ENCODE measurements at regions of chr3 and their contacts with region 1.

Region 1: DNA sequence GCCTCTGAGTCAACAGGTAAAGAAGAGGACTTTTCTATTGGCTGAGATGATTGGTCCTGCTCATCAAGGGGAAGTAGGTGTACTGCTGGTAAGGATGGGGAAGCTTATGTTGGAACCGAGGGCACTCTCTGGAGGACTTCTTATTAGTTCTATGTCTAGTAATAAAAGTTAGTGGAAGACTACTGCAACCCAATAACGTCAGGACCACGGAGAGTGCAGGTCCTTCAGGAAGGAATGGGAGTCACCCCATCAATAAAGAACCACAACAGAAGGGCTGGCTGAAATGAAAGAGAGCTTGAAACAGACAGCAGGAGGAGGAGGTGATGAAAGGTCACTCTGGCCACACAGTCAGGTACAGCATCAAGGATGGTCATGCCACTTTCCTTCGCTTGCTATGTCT is 68.8 kb upstream of the PRR23E start:
- DNase-seq: peak; percentile 21
- H3K4me3 ChIP-seq: no peak overlapping the region
- H3K27ac ChIP-seq: no peak overlapping the region
- H3K4me1 ChIP-seq: no peaks in the 10 kb centered on the region
- H3K27me3 ChIP-seq: no peaks in the 10 kb centered on the region
- CTCF ChIP-seq: peak in 1 of 2 donors; percentile 38

Region 2: GRCh38 chr3:127083778-127084670 is 40.1 kb before region 1 on chr3:
- CTCF ChIA-PET with region 1: no interaction called
- dilution Hi-C with region 1: loop called (anchors 5 kb)
- in situ Hi-C with region 1: no loop called
- intact Hi-C with region 1: no loop called
- DNase-seq: no peak
- H3K4me3 ChIP-seq: no peak overlapping the region
- H3K27ac ChIP-seq: no peak overlapping the region
- H3K4me1 ChIP-seq: no peaks in the 10 kb centered on the region
- H3K27me3 ChIP-seq: no peaks in the 10 kb centered on the region
- CTCF ChIP-seq: no peak

Region 3: GRCh38 chr3:127184870-127185216 is 60.7 kb after region 1 on chr3:
- CTCF ChIA-PET with region 1: no interaction called
- dilution Hi-C with region 1: loop called (anchors 5 kb)
- in situ Hi-C with region 1: no loop called
- intact Hi-C with region 1: no loop called
- DNase-seq: no peak
- H3K4me3 ChIP-seq: no peak overlapping the region
- H3K27ac ChIP-seq: no peak overlapping the region
- H3K4me1 ChIP-seq: no peaks in the 10 kb centered on the region
- H3K27me3 ChIP-seq: peaks cover 2% of the 10 kb centered on the region
- CTCF ChIP-seq: no peak

Measured in mammary epithelial cell (primary cell).